ENCODE measurements at regions of chr7 and their contacts with region 1.

Region 1: GRCh38 chr7:43869006-43869866 is at the start of gene MRPS24:
- DNase-seq: peak; percentile 94 to 96
- ATAC-seq: peak; percentile 82 to 89
- H3K4me3 ChIP-seq: peak within 1 kb of the TSS; percentile 77 to 94 (median 82)
- H3K27ac ChIP-seq: peak within 1 kb of the TSS; percentile 89 to 94 (median 92)
- H3K4me1 ChIP-seq: peaks cover 30 to 37% of the 10 kb centered on the region in 2 donors
- H3K27me3 ChIP-seq: no peaks in the 10 kb centered on the region
- CTCF ChIP-seq: no peak
- POLR2A ChIP-seq: peak; percentile 57 to 66
- total RNA-seq, gene MRPS24: 173 to 294 (median 255) TPM

Region 2: DNA sequence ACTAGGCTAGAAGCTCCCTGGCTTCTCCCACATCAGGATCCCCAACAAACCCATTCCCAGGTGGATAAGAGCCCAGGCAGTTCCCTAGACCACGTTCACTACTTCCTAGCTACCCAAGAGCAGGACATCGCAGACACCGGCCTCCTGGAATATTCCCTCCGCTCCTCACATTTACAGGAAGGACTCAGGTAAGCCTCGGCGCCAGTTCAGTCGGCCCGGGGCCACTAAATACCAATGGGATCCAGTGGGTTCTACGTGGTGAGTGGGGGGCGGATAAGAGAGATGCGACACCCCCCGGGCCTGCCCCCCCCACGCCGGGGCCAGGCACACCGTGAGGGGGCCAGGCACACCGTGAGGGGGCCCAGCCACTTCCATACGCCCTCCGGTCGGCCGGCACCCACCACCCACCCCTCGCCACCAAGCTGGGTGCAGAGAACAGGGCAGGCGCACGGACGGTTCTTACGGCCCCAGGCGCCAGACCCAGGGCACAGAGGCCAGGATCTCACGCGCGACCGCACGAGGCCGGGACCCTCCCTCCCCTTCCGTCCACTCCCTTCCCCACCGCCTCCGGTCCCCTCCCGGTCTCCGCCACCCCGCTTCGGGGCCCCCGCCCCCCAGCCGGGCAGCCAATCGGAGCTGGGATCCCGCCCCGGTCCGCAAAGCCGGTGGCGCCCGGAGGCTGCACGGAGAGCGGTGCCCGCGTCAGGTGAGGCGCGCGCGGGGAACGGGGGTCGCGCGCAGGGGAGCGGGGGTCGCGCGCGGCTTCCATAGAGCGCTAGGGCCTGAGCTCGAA is 111.0 kb before region 1 on chr7 and contains the start of gene BLVRA:
- in situ Hi-C with region 1: no loop called
- intact Hi-C with region 1: no loop called
- DNase-seq: peak; percentile 49 to 54
- ATAC-seq: peak; percentile 80 to 81
- H3K4me3 ChIP-seq: peak within 1 kb of the TSS; percentile 76 to 91 (median 82)
- H3K27ac ChIP-seq: peak within 1 kb of the TSS; percentile 52 to 79 (median 70)
- H3K4me1 ChIP-seq: peaks cover 10 to 11% of the 10 kb centered on the region in 2 donors
- H3K27me3 ChIP-seq: no peaks in the 10 kb centered on the region
- CTCF ChIP-seq: no peak
- POLR2A ChIP-seq: peak; percentile 11 to 40
- total RNA-seq, gene BLVRA: 26.7 to 45.9 (median 29.3) TPM

Region 3: DNA sequence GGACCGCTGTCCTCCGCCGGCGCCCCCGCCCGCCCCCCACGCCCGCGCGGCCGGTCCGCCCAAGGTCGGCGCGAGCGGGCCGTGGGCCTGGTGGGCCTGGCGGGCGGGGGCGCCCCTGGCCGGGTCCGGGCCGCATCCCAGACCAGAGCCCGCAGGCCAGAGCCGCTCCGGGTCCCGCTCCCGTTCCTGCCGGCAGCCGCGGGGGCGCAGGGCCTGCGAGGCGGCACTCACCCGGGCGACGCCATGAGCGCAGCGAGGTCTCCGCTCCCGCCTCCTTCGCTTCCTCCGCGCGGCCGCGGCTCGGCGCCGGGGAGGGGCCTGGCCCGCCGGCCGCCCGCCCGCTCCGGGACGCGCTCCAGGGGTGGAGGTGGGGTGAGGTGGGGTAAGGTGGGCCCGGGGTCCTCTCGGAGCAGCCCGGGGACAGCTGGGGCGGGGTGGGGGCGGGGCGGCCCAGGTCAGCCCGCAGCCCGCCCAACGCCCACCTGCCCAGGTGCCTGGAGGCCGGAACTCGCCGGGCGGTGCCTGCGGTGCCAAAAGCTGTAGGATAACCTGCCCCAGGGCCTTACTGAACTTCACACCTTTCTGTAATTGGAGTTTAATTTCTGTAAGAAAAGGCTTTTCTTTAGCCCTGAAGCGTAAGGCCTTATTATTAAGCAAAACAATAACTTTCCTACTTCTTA is 37.2 kb after region 1 on chr7 and contains the start of gene URGCP:
- in situ Hi-C with region 1: no loop called
- intact Hi-C with region 1: loop called (anchors 1 kb)
- DNase-seq: peak in 1 of 2 donors; percentile 24
- ATAC-seq: peak; percentile 77 to 79
- H3K4me3 ChIP-seq: peak within 1 kb of the TSS; percentile 65 to 78 (median 70)
- H3K27ac ChIP-seq: peak within 1 kb of the TSS; percentile 72 to 89 (median 77)
- H3K4me1 ChIP-seq: peaks cover 36 to 40% of the 10 kb centered on the region in 2 donors
- H3K27me3 ChIP-seq: no peaks in the 10 kb centered on the region
- CTCF ChIP-seq: no peak
- POLR2A ChIP-seq: no peak
- total RNA-seq, gene URGCP: 29.0 to 47.7 (median 38.3) TPM

Region 4: DNA sequence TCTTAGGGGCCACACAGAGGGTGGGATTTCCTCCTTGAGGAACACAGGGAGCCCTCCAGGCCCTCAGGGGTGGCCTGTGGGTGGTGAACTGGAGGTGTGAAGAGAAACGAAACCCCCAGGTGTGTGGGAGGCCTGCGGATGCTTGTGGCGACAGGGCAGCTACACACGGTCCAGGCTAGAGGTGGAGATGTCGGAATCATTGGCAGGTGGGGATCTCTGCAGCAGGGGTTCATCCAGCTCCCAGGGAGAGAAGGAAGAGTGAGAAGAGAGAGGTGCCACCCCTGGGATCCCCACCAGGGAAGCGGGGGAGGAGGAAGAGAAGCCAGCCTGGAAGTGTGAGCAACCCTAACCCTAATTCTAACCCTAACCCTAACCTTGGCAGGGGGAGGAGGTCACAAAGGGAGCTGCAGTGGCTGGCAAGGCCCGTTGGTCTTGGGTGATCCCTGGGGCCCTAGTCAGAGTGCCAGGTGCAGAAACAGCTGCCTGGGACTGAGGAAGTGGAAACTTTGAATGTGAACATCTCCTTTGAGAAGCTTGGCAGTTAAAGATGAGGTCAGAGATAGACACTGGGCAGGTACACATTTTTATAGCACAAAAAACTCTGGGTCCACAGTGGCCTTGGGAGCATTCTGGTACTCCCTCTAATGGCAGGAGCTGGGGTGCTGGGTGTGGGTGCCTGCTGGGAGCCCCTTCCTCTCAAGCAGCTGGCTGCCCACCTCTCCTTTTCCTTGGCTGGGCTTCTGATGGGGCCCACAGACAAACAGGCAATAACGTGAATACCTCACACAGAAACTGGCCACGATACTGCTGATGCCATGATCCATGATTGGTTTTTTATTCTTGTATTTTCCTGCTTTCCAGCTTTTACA is 228.1 kb after region 1 on chr7:
- in situ Hi-C with region 1: no loop called
- intact Hi-C with region 1: no loop called
- DNase-seq: no peak
- ATAC-seq: no peak
- H3K4me3 ChIP-seq: no peak overlapping the region
- H3K27ac ChIP-seq: no peak overlapping the region
- H3K4me1 ChIP-seq: no peaks in the 10 kb centered on the region
- H3K27me3 ChIP-seq: no peaks in the 10 kb centered on the region
- CTCF ChIP-seq: no peak
- POLR2A ChIP-seq: no peak

Region 5: GRCh38 chr7:44521347-44522095 is 652.3 kb after region 1 on chr7:
- in situ Hi-C with region 1: no loop called
- intact Hi-C with region 1: no loop called
- DNase-seq: no peak
- ATAC-seq: no peak
- H3K4me3 ChIP-seq: no peak overlapping the region
- H3K27ac ChIP-seq: no peak overlapping the region
- H3K4me1 ChIP-seq: no peaks in the 10 kb centered on the region
- H3K27me3 ChIP-seq: no peaks in the 10 kb centered on the region
- CTCF ChIP-seq: no peak
- POLR2A ChIP-seq: no peak